Vagina (tissue), 2 donors: ENCODE measurements at regions of chr6 and their contacts with region 1.

Region 1: DNA sequence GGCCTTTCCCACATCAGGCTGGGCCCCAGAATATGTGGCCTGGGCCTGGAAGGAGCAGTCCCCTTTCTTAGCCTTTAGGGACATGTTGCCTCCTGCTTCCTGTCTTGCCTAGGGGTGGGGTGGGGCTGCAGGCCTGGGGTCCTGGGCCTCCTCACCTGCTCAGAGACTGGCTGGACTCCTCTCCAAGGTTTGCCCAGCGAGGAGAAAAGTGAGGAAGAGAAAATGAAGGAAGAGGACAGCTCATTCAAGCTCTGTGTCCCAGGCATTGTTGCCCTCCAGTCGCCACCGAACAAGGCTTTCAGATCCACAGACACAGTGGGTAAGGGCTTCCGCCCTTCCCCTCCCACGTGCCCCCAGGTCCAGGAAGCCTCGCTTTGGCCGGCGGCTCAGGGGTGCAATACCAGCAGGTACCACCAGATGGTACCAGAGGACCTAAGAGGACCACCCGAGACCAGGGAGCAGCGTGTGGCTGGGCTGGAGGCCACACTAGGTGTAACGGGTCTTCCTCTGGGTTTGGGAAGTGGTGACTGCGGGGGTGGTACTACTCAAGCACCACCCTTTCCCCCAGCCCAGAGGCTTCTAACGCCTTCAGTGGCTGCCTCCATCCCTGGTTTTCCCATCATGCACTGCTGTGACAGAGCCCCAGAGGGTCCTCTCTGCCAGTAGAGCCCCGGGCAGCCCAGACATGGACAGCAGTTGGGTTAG is 5.5 kb upstream of the BAK1 start:
- DNase-seq: no peak
- H3K4me3 ChIP-seq: no peak overlapping the region
- H3K27ac ChIP-seq: peak overlapping the region; percentile 7
- H3K4me1 ChIP-seq: peaks cover 31% of the 10 kb centered on the region
- H3K27me3 ChIP-seq: no peaks in the 10 kb centered on the region
- CTCF ChIP-seq: peak; percentile 92 to 99 (median 98)
- POLR2A ChIP-seq: no peak

Region 2: GRCh38 chr6:33535104-33535603 is 50.4 kb before region 1 on chr6:
- intact Hi-C with region 1: no loop called
- DNase-seq: no peak
- H3K4me3 ChIP-seq: no peak overlapping the region
- H3K27ac ChIP-seq: no peak overlapping the region
- H3K4me1 ChIP-seq: no peaks in the 10 kb centered on the region
- H3K27me3 ChIP-seq: no peaks in the 10 kb centered on the region
- CTCF ChIP-seq: no peak
- POLR2A ChIP-seq: no peak

Region 3: DNA sequence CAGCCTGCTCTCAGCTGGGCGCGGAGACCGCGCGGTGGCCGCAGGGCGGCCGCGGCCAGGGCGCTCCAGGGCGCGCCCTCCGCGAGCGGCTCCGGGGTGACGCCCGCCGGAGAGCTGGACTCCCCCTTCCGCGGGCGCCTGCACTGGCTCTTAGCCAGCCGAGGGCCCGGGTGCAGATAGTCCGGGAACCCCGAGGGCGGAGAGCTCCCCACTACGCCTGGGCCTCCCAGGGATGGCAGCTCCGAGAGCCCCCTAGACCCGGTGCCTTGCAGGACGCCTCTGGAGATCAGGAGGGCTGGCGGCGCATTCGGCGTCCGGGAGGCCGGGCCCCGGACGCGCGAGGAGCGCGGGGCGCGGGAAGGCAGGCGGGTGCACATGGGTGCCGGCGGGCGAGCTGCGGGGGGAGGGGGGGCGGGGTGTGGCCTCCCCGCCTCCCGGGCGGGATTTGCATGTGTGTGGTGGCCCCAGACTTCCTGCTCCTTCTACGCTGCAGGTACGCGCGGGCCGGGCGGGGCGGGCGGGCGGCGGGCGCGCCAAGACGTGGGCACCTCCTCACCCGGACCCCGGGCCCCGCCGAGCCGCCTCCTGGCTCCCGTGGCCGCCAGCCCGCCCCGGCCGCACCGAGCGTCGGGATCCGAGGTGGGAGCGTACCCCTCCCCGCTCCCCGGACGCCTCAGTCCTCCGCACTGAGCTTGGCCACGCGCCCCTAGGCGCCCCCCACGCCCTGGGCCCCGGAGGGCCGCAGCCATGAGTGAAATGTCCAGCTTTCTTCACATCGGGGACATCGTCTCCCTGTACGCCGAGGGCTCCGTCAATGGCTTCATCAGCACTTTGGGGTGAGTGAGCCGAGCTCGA is 35.5 kb after region 1 on chr6 and contains the start of gene ITPR3:
- intact Hi-C with region 1: loop called (anchors 5 kb)
- DNase-seq: peak in 1 of 2 donors; percentile 87
- H3K4me3 ChIP-seq: peak within 1 kb of the TSS; percentile 57 to 90
- H3K27ac ChIP-seq: peak within 1 kb of the TSS; percentile 92
- H3K4me1 ChIP-seq: peaks cover 54% of the 10 kb centered on the region
- H3K27me3 ChIP-seq: no peaks in the 10 kb centered on the region
- CTCF ChIP-seq: no peak
- POLR2A ChIP-seq: peak in 1 of 2 donors; percentile 20
- total RNA-seq, gene ITPR3: 50.1 TPM

Region 4: DNA sequence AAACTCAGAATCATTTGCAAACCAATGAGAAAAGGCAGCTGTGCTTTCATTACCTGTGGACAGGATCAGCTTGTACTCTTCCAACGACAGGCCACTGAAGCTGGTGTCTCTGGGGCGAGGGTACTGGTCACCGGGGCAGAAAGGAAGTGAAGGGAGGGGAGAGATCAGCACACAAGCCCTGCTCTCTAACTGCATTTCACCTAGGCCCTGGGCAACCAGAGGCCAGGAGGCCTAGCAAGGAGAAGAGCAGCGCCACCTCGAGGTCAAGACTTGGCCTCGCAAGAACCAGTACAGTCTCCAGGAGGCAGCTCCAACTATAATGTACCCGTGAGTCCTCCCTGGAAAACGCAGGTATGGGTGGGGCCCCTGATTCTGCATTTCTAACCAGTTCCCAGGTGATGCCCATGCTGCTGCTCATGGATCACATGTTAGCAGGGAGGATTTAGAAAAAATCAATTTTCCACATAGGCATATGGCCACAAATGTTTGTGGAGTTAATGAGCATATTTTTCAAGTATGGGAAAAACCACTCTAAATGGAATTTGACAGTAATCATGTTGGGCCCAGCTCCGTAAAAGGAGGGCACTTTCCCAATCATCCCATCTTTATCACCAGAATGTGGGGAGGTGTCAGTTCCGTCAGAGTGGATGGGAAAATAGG is 115.0 kb after region 1 on chr6:
- intact Hi-C with region 1: loop called (anchors 5 kb)
- DNase-seq: no peak
- H3K4me3 ChIP-seq: no peak overlapping the region
- H3K27ac ChIP-seq: peak overlapping the region; percentile 34
- H3K4me1 ChIP-seq: peaks cover 36% of the 10 kb centered on the region
- H3K27me3 ChIP-seq: no peaks in the 10 kb centered on the region
- CTCF ChIP-seq: peak; percentile 27 to 46 (median 36)
- POLR2A ChIP-seq: no peak

Region 5: DNA sequence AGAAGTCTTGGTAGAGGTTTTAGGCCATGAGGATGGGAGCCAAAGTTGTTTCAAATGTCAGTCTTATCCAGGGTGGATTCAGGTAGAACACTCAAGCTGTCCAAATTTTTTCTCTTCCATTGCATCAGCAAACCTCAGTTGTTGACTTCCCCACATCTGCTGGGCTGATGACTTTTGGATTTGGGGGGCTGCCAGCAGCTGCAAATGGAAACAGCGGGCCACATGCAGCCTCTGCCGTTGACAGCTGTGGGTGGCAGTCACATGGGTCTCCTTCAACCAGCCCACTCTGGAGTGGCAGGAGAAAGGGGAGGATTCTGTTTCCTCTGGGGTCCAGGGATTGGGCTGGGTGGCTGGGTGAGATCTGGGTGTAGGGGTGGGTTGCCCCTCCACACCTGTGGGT is 224.0 kb after region 1 on chr6:
- intact Hi-C with region 1: no loop called
- DNase-seq: no peak
- H3K4me3 ChIP-seq: no peak overlapping the region
- H3K27ac ChIP-seq: no peak overlapping the region
- H3K4me1 ChIP-seq: no peaks in the 10 kb centered on the region
- H3K27me3 ChIP-seq: no peaks in the 10 kb centered on the region
- CTCF ChIP-seq: no peak
- POLR2A ChIP-seq: no peak

Region 6: GRCh38 chr6:33950472-33950881 is 364.9 kb after region 1 on chr6:
- intact Hi-C with region 1: no loop called
- DNase-seq: no peak
- H3K4me3 ChIP-seq: no peak overlapping the region
- H3K27ac ChIP-seq: no peak overlapping the region
- H3K4me1 ChIP-seq: no peaks in the 10 kb centered on the region
- H3K27me3 ChIP-seq: no peaks in the 10 kb centered on the region
- CTCF ChIP-seq: no peak
- POLR2A ChIP-seq: no peak